Activated CD4-positive, alpha-beta T cell treated with anti-CD3 and anti-CD28 coated beads, Interleukin-2, amount 10 ng/mL, durations not matched to agents 24 days and 14 days (primary cell): ENCODE measurements at regions of chr12 and their contacts with region 1.

Region 1: GRCh38 chr12:124567661-124568373 is 405 bp upstream of the NCOR2 start:
- DNase-seq: peak; percentile 96
- H3K4me3 Mint-ChIP-seq: peak overlapping the region; percentile 76
- H3K27ac Mint-ChIP-seq: peak overlapping the region; percentile 79
- H3K4me1 Mint-ChIP-seq: peaks cover 14% of the 10 kb centered on the region
- H3K27me3 Mint-ChIP-seq: peaks cover 2% of the 10 kb centered on the region

Region 2: GRCh38 chr12:124073304-124074035 is 494.3 kb before region 1 on chr12:
- intact Hi-C with region 1: no loop called
- DNase-seq: no peak
- H3K4me3 Mint-ChIP-seq: no peak overlapping the region
- H3K27ac Mint-ChIP-seq: no peak overlapping the region
- H3K4me1 Mint-ChIP-seq: peaks cover 4% of the 10 kb centered on the region
- H3K27me3 Mint-ChIP-seq: peaks cover 5% of the 10 kb centered on the region

Region 3: DNA sequence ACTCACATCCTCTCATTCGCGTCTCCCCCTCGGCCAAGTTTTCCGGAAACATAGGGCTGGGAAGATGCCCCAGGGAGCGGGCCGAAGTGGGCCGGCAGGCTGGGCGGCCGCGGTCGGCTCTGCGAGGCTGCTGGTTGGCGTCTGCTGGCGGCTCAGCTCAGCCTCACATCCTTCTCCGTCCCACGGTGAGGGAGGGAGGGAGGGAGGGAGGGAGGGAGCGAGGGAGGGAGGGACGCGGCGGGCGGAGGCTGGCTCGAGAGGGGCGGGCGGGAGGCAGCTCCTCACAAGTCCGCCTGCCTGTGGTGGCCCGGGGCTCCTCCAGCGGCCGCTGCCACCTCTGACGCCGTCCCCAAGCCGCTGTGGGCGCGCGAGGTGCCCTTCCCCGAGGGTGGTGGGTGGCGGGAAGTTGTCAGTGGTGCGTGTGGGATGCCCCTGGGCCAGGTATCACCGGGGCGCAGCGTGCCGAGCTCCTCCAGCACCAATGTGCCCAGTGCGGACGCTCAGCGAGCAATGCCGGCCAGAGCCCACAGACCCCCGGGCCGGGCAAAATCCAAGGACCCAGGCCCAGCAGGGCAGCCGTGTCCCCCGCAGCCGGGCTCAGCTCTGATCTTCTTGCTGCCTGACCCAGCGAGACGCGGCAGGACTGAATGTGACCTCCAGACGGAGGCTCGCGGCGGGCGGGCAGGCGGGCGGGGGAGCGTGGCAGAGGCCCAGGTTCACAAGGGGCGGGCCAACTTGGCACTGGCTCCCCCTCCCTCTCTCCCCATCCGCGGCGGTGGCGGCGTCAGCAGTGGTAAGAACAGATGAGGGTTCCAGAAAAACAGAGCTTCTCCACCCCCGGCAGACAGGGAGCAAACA is 178.9 kb before region 1 on chr12:
- intact Hi-C with region 1: loop called (anchors 2 kb)
- DNase-seq: peak; percentile 82
- H3K4me3 Mint-ChIP-seq: peak overlapping the region; percentile 58
- H3K27ac Mint-ChIP-seq: peak overlapping the region; percentile 37
- H3K4me1 Mint-ChIP-seq: peaks cover 24% of the 10 kb centered on the region
- H3K27me3 Mint-ChIP-seq: no peaks in the 10 kb centered on the region

Region 4: GRCh38 chr12:124545508-124546418 is 22.1 kb before region 1 on chr12:
- intact Hi-C with region 1: loop called (anchors 1 kb)
- DNase-seq: peak; percentile 85
- H3K4me3 Mint-ChIP-seq: peak overlapping the region; percentile 25
- H3K27ac Mint-ChIP-seq: peak overlapping the region; percentile 57
- H3K4me1 Mint-ChIP-seq: peaks cover 38% of the 10 kb centered on the region
- H3K27me3 Mint-ChIP-seq: no peaks in the 10 kb centered on the region

Region 5: GRCh38 chr12:124713436-124714082 is 145.7 kb after region 1 on chr12:
- intact Hi-C with region 1: loop called (anchors 2 kb)
- DNase-seq: peak; percentile 90
- H3K4me3 Mint-ChIP-seq: peak overlapping the region; percentile 58
- H3K27ac Mint-ChIP-seq: peak overlapping the region; percentile 78
- H3K4me1 Mint-ChIP-seq: peaks cover 18% of the 10 kb centered on the region
- H3K27me3 Mint-ChIP-seq: peaks cover 20% of the 10 kb centered on the region

Region 6: DNA sequence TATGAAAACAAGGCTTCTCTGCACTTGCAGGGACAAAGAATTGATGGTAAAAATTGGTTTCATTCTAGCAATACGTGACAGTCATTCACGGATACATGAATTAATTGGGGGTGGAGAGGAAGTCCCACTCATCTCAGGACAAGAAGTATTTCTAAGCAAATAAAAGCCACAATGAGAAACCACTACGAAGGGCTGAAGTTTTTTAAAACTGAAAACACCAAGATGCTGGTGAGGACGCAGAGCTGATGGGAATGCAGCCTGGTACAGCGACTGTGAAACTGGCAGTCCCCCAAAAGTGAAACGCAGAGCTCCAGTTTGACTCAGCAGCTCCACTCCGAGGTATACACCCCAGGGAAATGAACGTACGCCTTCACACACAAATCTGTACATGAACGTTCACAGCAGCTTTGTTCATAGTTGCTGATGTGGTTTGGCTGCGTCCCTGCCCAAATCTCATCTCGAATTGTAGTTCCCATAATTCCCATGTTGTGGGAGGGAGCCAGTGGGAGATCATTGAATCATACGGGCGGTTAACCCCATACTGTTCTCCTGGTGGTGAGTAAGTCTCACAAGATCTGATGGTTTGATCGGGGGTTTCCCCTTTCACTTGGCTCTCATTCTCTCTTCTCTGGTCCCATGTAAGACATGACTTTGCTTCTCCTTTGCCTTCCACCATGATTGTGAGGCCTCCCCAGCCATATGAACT is 206.8 kb after region 1 on chr12:
- intact Hi-C with region 1: loop called (anchors 2 kb)
- DNase-seq: peak; percentile 90
- H3K4me3 Mint-ChIP-seq: peak overlapping the region; percentile 61
- H3K27ac Mint-ChIP-seq: peak overlapping the region; percentile 68
- H3K4me1 Mint-ChIP-seq: peaks cover 34% of the 10 kb centered on the region
- H3K27me3 Mint-ChIP-seq: peaks cover 24% of the 10 kb centered on the region